ENCODE measurements at regions of chr7 and their contacts with region 1.

Region 1: DNA sequence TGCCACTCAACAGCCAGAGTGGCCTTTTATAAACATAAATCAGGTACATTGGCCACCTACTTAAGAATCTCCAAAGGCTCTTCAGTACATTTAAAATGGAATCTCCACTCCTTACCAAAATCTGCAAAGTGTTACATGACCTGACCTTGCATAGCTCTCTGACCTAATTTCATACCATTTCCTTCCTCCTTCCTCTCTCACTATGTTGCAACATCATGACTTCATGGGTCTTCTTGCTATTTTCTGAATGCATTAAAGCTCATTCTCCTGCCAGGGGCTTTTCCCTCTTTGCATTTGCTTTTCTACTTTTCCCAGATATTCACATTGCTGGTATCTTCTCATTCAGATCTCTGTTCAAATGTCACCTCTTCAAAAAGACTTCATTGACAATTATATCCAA is 22.1 kb upstream of the PPP1R17 start:
- DNase-seq: peak; percentile 61 to 88 (median 84)
- H3K4me3 ChIP-seq: peak overlapping the region in 1 of 3 experiments; percentile 45
- H3K4me3 Mint-ChIP-seq: peak overlapping the region in 1 of 2 donors; percentile 66
- H3K27ac ChIP-seq: no peak overlapping the region
- H3K27ac Mint-ChIP-seq: peak overlapping the region; percentile 6 to 95 (median 86)
- H3K4me1 ChIP-seq: peaks cover 41 to 42% of the 10 kb centered on the region in 2 donors
- H3K4me1 Mint-ChIP-seq: peaks cover 37% of the 10 kb centered on the region
- H3K27me3 ChIP-seq: peaks cover 0 to 2% of the 10 kb centered on the region in 2 donors
- H3K27me3 Mint-ChIP-seq: peaks cover 0 to 1% (median 0%) of the 10 kb centered on the region in 3 donors
- CTCF ChIP-seq: no peak

Region 2: DNA sequence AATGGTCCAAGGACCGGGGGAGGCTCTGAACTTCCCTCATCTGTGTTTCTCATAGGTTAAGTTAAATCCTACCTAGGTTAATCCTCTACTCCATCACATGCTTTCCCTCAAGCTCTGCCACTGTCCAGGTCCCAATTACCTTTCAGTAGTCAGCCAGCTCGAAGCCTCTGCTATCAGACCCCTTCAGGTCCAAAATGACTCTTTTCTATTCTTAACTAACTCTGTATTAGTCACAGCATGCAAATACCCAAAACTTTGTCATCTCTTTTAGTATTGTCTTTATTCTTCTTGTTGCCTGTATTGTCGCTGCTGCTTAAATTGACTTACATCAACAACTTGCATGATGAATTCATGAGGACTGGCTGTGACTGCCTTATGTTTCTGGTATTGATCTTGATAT is 37.5 kb after region 1 on chr7:
- intact Hi-C with region 1: loop called in 1 of 2 experiments (anchors 5 kb)
- DNase-seq: no peak
- H3K4me3 ChIP-seq: no peak overlapping the region
- H3K4me3 Mint-ChIP-seq: no peak overlapping the region
- H3K27ac ChIP-seq: no peak overlapping the region
- H3K27ac Mint-ChIP-seq: no peak overlapping the region
- H3K4me1 ChIP-seq: peaks cover 8 to 16% of the 10 kb centered on the region in 2 donors
- H3K4me1 Mint-ChIP-seq: peaks cover 14% of the 10 kb centered on the region
- H3K27me3 ChIP-seq: peaks cover 3 to 7% of the 10 kb centered on the region in 2 donors
- H3K27me3 Mint-ChIP-seq: peaks cover 0 to 21% (median 4%) of the 10 kb centered on the region in 3 donors
- CTCF ChIP-seq: no peak

Region 3: GRCh38 chr7:31729198-31729781 is 64.4 kb after region 1 on chr7:
- intact Hi-C with region 1: no loop called
- DNase-seq: no peak
- H3K4me3 ChIP-seq: no peak overlapping the region
- H3K4me3 Mint-ChIP-seq: no peak overlapping the region
- H3K27ac ChIP-seq: no peak overlapping the region
- H3K27ac Mint-ChIP-seq: no peak overlapping the region
- H3K4me1 ChIP-seq: no peaks in the 10 kb centered on the region
- H3K4me1 Mint-ChIP-seq: no peaks in the 10 kb centered on the region
- H3K27me3 ChIP-seq: no peaks in the 10 kb centered on the region
- H3K27me3 Mint-ChIP-seq: peaks cover 0 to 2% (median 1%) of the 10 kb centered on the region in 3 donors
- CTCF ChIP-seq: peak; percentile 30

Region 4: DNA sequence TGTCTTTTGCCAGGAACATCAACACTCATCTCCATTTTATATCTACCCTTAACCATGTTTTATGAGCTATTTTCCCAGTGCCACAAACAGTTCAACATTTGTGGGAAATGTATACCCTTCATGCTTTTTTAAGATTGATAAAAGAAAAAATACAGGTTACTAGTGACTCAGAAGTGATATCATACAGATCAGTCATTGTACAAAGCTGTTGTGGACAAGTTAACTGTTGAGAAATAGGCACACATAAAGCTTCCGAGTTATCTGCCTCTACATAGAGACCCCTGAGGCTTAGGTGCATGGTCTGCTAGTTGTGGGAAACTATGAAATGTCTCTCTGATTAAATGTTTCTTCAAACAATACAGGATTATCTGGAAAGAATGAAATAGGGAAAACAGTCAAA is 729.0 kb after region 1 on chr7:
- intact Hi-C with region 1: no loop called
- DNase-seq: no peak
- H3K4me3 ChIP-seq: no peak overlapping the region
- H3K4me3 Mint-ChIP-seq: no peak overlapping the region
- H3K27ac ChIP-seq: no peak overlapping the region
- H3K27ac Mint-ChIP-seq: no peak overlapping the region
- H3K4me1 ChIP-seq: no peaks in the 10 kb centered on the region
- H3K4me1 Mint-ChIP-seq: no peaks in the 10 kb centered on the region
- H3K27me3 ChIP-seq: no peaks in the 10 kb centered on the region
- H3K27me3 Mint-ChIP-seq: peaks cover 6 to 12% (median 11%) of the 10 kb centered on the region in 3 donors
- CTCF ChIP-seq: no peak